ENCODE measurements at regions of chr22 and their contacts with region 1.

Region 1: GRCh38 chr22:23857606-23858483 is at the start of gene SLC2A11:
- DNase-seq: peak; percentile 96
- H3K4me3 ChIP-seq: peak within 1 kb of the TSS; percentile 87 to 88
- H3K27ac ChIP-seq: peak within 1 kb of the TSS; percentile 59 to 97
- H3K4me1 ChIP-seq: peaks cover 0 to 22% of the 10 kb centered on the region in 2 experiments; a peak in 2 of 4 replicates
- H3K27me3 ChIP-seq: no peaks in the 10 kb centered on the region
- CTCF ChIP-seq: peak; percentile 31
- EP300 ChIP-seq: no peak
- RAD21 ChIP-seq: peak; percentile 35
- polyA plus RNA-seq, gene SLC2A11: 21.8 and 27.1 TPM in 2 replicates

Region 2: DNA sequence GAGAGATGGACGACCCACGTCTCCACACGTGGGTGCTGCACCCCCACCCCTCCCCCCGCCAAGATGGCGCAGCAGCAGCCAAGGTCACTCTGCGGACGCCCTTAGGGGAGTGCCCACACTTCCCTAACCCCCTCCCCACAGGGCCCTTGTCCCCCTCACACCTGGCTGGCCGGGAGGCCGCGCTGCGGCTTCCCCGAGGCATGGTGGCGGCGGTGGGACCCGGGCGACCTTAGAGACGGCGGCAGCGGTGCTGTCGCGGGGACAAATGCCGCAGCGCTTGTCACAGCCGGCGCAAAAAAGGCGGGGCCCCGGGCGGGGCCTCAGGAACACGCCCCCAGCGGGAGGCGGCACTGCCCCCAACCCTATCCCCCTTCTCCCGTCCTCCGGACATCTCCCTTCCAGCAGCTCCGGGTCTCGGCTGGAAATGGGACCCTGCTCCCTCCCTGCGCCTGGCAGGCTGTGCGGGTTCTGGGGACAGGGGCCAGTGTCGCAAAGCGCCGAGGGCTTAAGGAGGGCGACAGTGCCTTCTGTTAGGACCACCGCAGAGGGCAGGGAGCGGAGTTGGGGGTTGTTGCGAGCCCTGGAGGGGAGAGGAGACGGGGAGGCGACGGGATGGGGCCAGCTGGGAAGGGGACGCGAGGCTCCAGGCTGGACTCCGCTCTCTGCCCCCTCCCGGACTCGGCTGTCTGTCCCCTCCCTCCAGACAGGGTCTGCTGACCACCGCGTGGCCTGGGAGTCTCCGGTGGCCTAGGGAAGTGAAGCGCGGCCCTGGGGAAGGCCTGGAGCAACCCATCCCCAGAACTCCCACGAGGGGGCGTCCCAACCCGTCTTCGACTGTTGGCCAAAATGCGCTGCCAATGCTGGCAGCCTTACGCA is 89.9 kb before region 1 on chr22 and contains the start of gene CHCHD10:
- CTCF ChIA-PET with region 1: interaction called, 277 read pairs
- POLR2A ChIA-PET with region 1: interaction called, 5 read pairs
- DNase-seq: peak; percentile 96
- H3K4me3 ChIP-seq: peak within 1 kb of the TSS; percentile 69
- H3K27ac ChIP-seq: peak within 1 kb of the TSS; percentile 48 to 89; a peak in 3 of 4 replicates
- H3K4me1 ChIP-seq: peaks cover 9 to 16% of the 10 kb centered on the region in 2 experiments; a peak in 3 of 4 replicates
- H3K27me3 ChIP-seq: no peaks in the 10 kb centered on the region
- CTCF ChIP-seq: peak; percentile 79
- EP300 ChIP-seq: no peak
- RAD21 ChIP-seq: peak; percentile 70
- polyA plus RNA-seq, gene CHCHD10: 27.7 and 70.1 TPM in 2 replicates

Region 3: DNA sequence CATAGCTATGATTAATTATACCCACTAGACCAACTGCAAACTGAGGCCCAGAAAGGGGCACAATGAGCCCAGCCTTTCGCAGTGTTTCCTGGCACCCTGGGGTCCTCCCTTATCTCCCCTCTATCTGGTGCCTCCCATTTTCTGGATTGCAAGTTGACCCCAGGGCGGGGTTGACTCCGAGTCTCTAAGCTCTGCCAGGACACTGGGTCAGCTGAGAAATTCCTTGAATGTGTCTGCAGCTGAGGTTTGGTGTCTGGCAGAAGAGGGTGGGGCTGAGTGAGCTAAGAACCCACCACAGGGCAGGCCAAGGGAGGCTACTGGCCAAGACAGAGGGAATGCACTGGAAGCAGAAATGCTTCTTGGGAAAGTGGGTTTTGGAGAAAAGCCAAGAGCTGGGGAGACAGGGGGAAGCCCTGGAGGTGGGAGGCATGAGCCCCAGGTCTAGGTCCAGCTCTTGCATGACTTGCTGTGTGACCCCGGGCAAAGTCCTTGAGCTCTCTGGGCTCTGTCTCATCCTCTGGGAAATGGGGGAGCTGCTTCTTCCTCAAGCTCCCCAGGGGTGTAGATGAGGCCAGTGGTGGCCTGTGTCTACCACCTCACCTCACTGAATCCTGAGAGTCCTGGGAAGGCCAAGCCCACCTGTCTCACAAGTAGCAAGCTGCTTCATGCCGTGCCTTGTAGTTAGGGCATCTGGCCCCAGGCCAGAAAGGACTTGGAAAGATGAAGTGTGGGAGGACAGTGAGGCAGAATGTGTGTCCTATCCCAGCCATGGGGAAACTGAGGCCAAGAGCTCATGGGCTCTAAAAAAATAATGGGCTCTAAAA is 82.9 kb before region 1 on chr22:
- CTCF ChIA-PET with region 1: interaction called, 277 read pairs
- POLR2A ChIA-PET with region 1: no interaction called
- DNase-seq: no peak
- H3K4me3 ChIP-seq: no peak overlapping the region
- H3K27ac ChIP-seq: no peak overlapping the region
- H3K4me1 ChIP-seq: peaks cover 4 to 34% of the 10 kb centered on the region in 2 experiments; a peak in 2 of 4 replicates
- H3K27me3 ChIP-seq: no peaks in the 10 kb centered on the region
- CTCF ChIP-seq: no peak
- EP300 ChIP-seq: no peak
- RAD21 ChIP-seq: no peak

Region 4: DNA sequence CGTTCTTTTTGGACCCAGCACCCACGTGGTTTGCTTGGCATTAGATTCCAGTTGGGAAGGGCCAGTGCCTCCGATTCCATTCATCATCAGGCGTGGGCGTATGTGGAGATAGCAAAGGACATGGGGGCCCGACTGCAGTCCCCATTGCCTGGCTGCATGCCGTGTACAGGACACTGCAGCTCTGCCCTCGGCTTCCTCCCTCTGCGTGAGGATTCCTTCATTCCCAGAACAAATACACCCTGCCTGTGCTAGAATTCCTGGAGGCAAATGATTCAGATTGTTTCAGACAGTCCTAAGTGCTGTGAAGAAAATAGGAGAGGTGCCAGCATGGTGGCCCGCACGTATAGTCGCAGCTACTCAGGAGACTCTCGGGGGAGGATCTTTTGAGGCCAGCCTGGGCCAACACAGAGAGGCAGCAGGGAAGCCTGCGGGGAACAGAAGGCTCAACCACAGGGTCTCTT is 34.5 kb before region 1 on chr22:
- CTCF ChIA-PET with region 1: no interaction called
- POLR2A ChIA-PET with region 1: no interaction called
- DNase-seq: no peak
- H3K4me3 ChIP-seq: no peak overlapping the region
- H3K27ac ChIP-seq: peak overlapping the region; percentile 13 to 18; a peak in 3 of 4 replicates
- H3K4me1 ChIP-seq: peaks cover 0 to 48% of the 10 kb centered on the region in 2 experiments; a peak in 1 of 4 replicates
- H3K27me3 ChIP-seq: no peaks in the 10 kb centered on the region
- CTCF ChIP-seq: no peak
- EP300 ChIP-seq: no peak
- RAD21 ChIP-seq: no peak

Region 5: GRCh38 chr22:23878219-23878618 is 20.4 kb after region 1 on chr22:
- CTCF ChIA-PET with region 1: interaction called, 11 read pairs
- POLR2A ChIA-PET with region 1: no interaction called
- DNase-seq: no peak
- H3K4me3 ChIP-seq: no peak overlapping the region
- H3K27ac ChIP-seq: no peak overlapping the region
- H3K4me1 ChIP-seq: no peaks in the 10 kb centered on the region
- H3K27me3 ChIP-seq: no peaks in the 10 kb centered on the region
- CTCF ChIP-seq: no peak
- EP300 ChIP-seq: no peak
- RAD21 ChIP-seq: no peak

Region 6: GRCh38 chr22:23893943-23894709 is 36.3 kb after region 1 on chr22 and contains the start of gene MIF:
- CTCF ChIA-PET with region 1: interaction called, 15 read pairs
- POLR2A ChIA-PET with region 1: interaction called, 15 read pairs
- DNase-seq: peak; percentile 98
- H3K4me3 ChIP-seq: peak within 1 kb of the TSS; percentile 79 to 85
- H3K27ac ChIP-seq: peak within 1 kb of the TSS; percentile 84 to 96
- H3K4me1 ChIP-seq: peaks cover 10 to 33% of the 10 kb centered on the region in 2 experiments; a peak in 2 of 4 replicates
- H3K27me3 ChIP-seq: no peaks in the 10 kb centered on the region
- CTCF ChIP-seq: peak; percentile 89
- EP300 ChIP-seq: no peak
- RAD21 ChIP-seq: no peak
- polyA plus RNA-seq, gene MIF: 496 and 565 TPM in 2 replicates